Caki2 (cell line): ENCODE measurements at regions of chr3 and their contacts with region 1.

Region 1: GRCh38 chr3:192892981-192893700 is 24.5 kb downstream of the MB21D2 start:
- DNase-seq: peak; percentile 83

Region 2: GRCh38 chr3:193592944-193593667 is 700.0 kb after region 1 on chr3 and contains the start of gene OPA1:
- in situ Hi-C with region 1: loop called (anchors 25 kb)
- DNase-seq: peak; percentile 97
- total RNA-seq, gene OPA1: 25.0 and 50.4 TPM in 2 replicates